CD4-positive, alpha-beta memory T cell (primary cell): ENCODE measurements at regions of chr12 and their contacts with region 1.

Region 1: GRCh38 chr12:117098361-117099217 is 627 bp downstream of the TESC start:
- DNase-seq: peak; percentile 12 to 45 (median 22)
- H3K4me3 ChIP-seq: peak overlapping the region; percentile 12 to 51
- H3K4me3 Mint-ChIP-seq: peak overlapping the region; percentile 46 to 86 (median 82)
- H3K27ac ChIP-seq: no peak overlapping the region
- H3K27ac Mint-ChIP-seq: peak overlapping the region in 1 of 7 donors; percentile 56
- H3K4me1 ChIP-seq: peaks cover 23% of the 10 kb centered on the region
- H3K4me1 Mint-ChIP-seq: peaks cover 5 to 34% (median 18%) of the 10 kb centered on the region in 4 donors
- H3K27me3 ChIP-seq: no peaks in the 10 kb centered on the region
- H3K27me3 Mint-ChIP-seq: peaks cover 6 to 11% of the 10 kb centered on the region in 2 donors

Region 2: GRCh38 chr12:117134059-117134458 is 35.5 kb after region 1 on chr12:
- CTCF ChIA-PET with region 1: no interaction called
- POLR2A ChIA-PET with region 1: interaction called, 5 read pairs
- intact Hi-C with region 1: loop called (anchors 1 kb)
- DNase-seq: peak; percentile 63 to 80 (median 65)
- H3K4me3 ChIP-seq: peak overlapping the region in 1 of 2 donors; percentile 18
- H3K4me3 Mint-ChIP-seq: peak overlapping the region; percentile 17 to 74 (median 49)
- H3K27ac ChIP-seq: no peak overlapping the region
- H3K27ac Mint-ChIP-seq: peak overlapping the region; percentile 51 to 93 (median 86)
- H3K4me1 ChIP-seq: peaks cover 17% of the 10 kb centered on the region
- H3K4me1 Mint-ChIP-seq: peaks cover 9 to 20% (median 13%) of the 10 kb centered on the region in 4 donors
- H3K27me3 ChIP-seq: no peaks in the 10 kb centered on the region
- H3K27me3 Mint-ChIP-seq: no peaks in the 10 kb centered on the region